ENCODE measurements at regions of chr3 and their contacts with region 1.

Region 1: GRCh38 chr3:169966428-169966950 is at the start of gene SEC62:
- DNase-seq: peak; percentile 88 to 96 (median 95)
- ATAC-seq: peak; percentile 87
- H3K4me3 ChIP-seq: peak within 1 kb of the TSS; percentile 84 to 87
- H3K4me3 Mint-ChIP-seq: peak within 1 kb of the TSS; percentile 90
- H3K27ac ChIP-seq: peak within 1 kb of the TSS; percentile 94 to 96
- H3K27ac Mint-ChIP-seq: peak within 1 kb of the TSS; percentile 99
- H3K4me1 ChIP-seq: peaks cover 42% of the 10 kb centered on the region
- H3K4me1 Mint-ChIP-seq: peaks cover 54% of the 10 kb centered on the region
- H3K27me3 ChIP-seq: no peaks in the 10 kb centered on the region
- H3K27me3 Mint-ChIP-seq: no peaks in the 10 kb centered on the region
- CTCF ChIP-seq: no peak
- total RNA-seq, gene SEC62: 115 TPM

Region 2: GRCh38 chr3:169772897-169773828 is 193.3 kb before region 1 on chr3 and contains the start of gene MYNN:
- CTCF ChIA-PET with region 1: interaction called, 3 read pairs
- POLR2A ChIA-PET with region 1: interaction called, 28 read pairs
- intact Hi-C with region 1: loop called in 1 of 2 experiments (anchors 2 kb)
- DNase-seq: peak; percentile 83 to 97 (median 92)
- ATAC-seq: peak; percentile 78
- H3K4me3 ChIP-seq: peak within 1 kb of the TSS; percentile 93 to 99
- H3K4me3 Mint-ChIP-seq: peak within 1 kb of the TSS; percentile 99
- H3K27ac ChIP-seq: peak within 1 kb of the TSS; percentile 97 to 100
- H3K27ac Mint-ChIP-seq: peak within 1 kb of the TSS; percentile 99
- H3K4me1 ChIP-seq: peaks cover 30% of the 10 kb centered on the region
- H3K4me1 Mint-ChIP-seq: peaks cover 50% of the 10 kb centered on the region
- H3K27me3 ChIP-seq: no peaks in the 10 kb centered on the region
- H3K27me3 Mint-ChIP-seq: no peaks in the 10 kb centered on the region
- CTCF ChIP-seq: no peak
- total RNA-seq, gene MYNN: 21.1 to 24.7 TPM

Region 3: DNA sequence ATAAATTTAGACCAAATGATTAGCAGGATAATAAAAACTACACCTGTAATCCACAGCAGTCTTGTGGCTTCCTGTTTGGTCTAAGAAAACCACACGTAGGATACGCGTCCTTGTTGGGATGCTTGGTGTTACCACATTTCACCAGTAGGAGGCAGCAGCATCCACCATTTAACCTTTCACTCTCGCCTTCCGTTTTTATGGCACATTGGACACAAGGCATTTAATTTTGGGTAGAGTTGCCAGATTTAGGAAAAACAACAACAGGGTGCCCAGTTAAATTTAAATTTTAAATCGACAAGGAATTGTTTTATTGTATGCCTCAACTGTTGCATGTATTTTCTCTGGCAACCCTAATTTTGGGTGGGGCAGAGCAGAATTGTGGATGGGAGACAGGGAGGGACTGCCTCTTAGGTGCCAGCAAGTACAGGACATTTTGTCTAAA is 103.0 kb before region 1 on chr3:
- CTCF ChIA-PET with region 1: interaction called, 13 read pairs
- POLR2A ChIA-PET with region 1: interaction called, 9 read pairs
- intact Hi-C with region 1: loop called (anchors 1 to 2 kb)
- DNase-seq: peak; percentile 21 to 82 (median 59)
- ATAC-seq: peak; percentile 69
- H3K4me3 ChIP-seq: no peak overlapping the region
- H3K4me3 Mint-ChIP-seq: no peak overlapping the region
- H3K27ac ChIP-seq: no peak overlapping the region
- H3K27ac Mint-ChIP-seq: no peak overlapping the region
- H3K4me1 ChIP-seq: peaks cover 15% of the 10 kb centered on the region
- H3K4me1 Mint-ChIP-seq: peaks cover 20% of the 10 kb centered on the region
- H3K27me3 ChIP-seq: peaks cover 0 to 4% of the 10 kb centered on the region in 2 experiments
- H3K27me3 Mint-ChIP-seq: peaks cover 5% of the 10 kb centered on the region
- CTCF ChIP-seq: peak; percentile 95

Region 4: DNA sequence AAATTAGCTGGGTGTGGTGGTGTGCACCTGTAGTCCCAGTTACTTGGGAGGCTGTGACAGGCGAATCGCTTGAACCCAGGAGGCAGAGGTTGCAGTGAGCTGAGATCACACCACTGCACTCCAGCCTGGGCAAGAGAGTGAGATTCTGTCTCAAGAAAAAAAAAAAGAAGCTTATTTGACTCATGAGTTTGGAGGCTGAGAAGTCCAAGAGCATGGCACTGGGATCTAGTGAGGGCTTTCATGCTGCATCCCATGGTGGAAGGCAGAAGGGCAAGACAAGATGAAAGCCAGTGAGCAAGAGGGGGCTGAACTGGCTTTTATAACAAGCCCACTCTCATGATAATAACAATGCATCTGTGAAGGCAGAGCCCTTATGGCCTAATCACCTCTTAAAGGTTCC is 33.6 kb after region 1 on chr3:
- CTCF ChIA-PET with region 1: no interaction called
- POLR2A ChIA-PET with region 1: no interaction called
- intact Hi-C with region 1: loop called in 1 of 2 experiments (anchors 2 kb)
- DNase-seq: no peak
- ATAC-seq: no peak
- H3K4me3 ChIP-seq: no peak overlapping the region
- H3K4me3 Mint-ChIP-seq: no peak overlapping the region
- H3K27ac ChIP-seq: no peak overlapping the region
- H3K27ac Mint-ChIP-seq: no peak overlapping the region
- H3K4me1 ChIP-seq: peaks cover 21% of the 10 kb centered on the region
- H3K4me1 Mint-ChIP-seq: peaks cover 28% of the 10 kb centered on the region
- H3K27me3 ChIP-seq: no peaks in the 10 kb centered on the region
- H3K27me3 Mint-ChIP-seq: no peaks in the 10 kb centered on the region
- CTCF ChIP-seq: no peak

Region 5: GRCh38 chr3:170221924-170222646 is 255.6 kb after region 1 on chr3 and contains the start of gene PRKCI:
- CTCF ChIA-PET with region 1: no interaction called
- POLR2A ChIA-PET with region 1: no interaction called
- intact Hi-C with region 1: loop called in 1 of 2 experiments (anchors 2 kb)
- DNase-seq: peak; percentile 75 to 94 (median 86)
- ATAC-seq: peak; percentile 83
- H3K4me3 ChIP-seq: peak within 1 kb of the TSS; percentile 64 to 92
- H3K4me3 Mint-ChIP-seq: peak within 1 kb of the TSS; percentile 91
- H3K27ac ChIP-seq: peak within 1 kb of the TSS; percentile 76 to 82
- H3K27ac Mint-ChIP-seq: peak within 1 kb of the TSS; percentile 93
- H3K4me1 ChIP-seq: peaks cover 3% of the 10 kb centered on the region
- H3K4me1 Mint-ChIP-seq: peaks cover 36% of the 10 kb centered on the region
- H3K27me3 ChIP-seq: no peaks in the 10 kb centered on the region
- H3K27me3 Mint-ChIP-seq: no peaks in the 10 kb centered on the region
- CTCF ChIP-seq: no peak
- total RNA-seq, gene PRKCI: 17.6 to 20.2 TPM

Region 6: GRCh38 chr3:170869645-170870593 is 903.4 kb after region 1 on chr3 and contains the start of gene RPL22L1:
- CTCF ChIA-PET with region 1: no interaction called
- POLR2A ChIA-PET with region 1: interaction called, 3 read pairs
- intact Hi-C with region 1: loop called (anchors 2 to 10 kb)
- DNase-seq: peak; percentile 85 to 97 (median 93)
- ATAC-seq: peak; percentile 93
- H3K4me3 ChIP-seq: peak within 1 kb of the TSS; percentile 73 to 77
- H3K4me3 Mint-ChIP-seq: peak within 1 kb of the TSS; percentile 94
- H3K27ac ChIP-seq: peak within 1 kb of the TSS; percentile 84 to 94
- H3K27ac Mint-ChIP-seq: peak within 1 kb of the TSS; percentile 97
- H3K4me1 ChIP-seq: peaks cover 27% of the 10 kb centered on the region
- H3K4me1 Mint-ChIP-seq: peaks cover 28% of the 10 kb centered on the region
- H3K27me3 ChIP-seq: no peaks in the 10 kb centered on the region
- H3K27me3 Mint-ChIP-seq: no peaks in the 10 kb centered on the region
- CTCF ChIP-seq: no peak
- total RNA-seq, gene RPL22L1: 54.3 to 56.8 TPM